ENCODE measurements at regions of chr13 and their contacts with region 1.

Region 1: GRCh38 chr13:20843166-20843565 is 59.4 kb downstream of the XPO4 start:
- DNase-seq: peak; percentile 18
- ATAC-seq: no peak
- H3K4me3 ChIP-seq: no peak overlapping the region
- H3K27ac ChIP-seq: no peak overlapping the region
- H3K4me1 ChIP-seq: 0 out of 2 replicates have a peak, but pooled peaks cover 2% of the 10 kb centered on the region
- H3K27me3 ChIP-seq: no peaks in the 10 kb centered on the region
- CTCF ChIP-seq: no peak
- POLR2A ChIP-seq: no peak
- RAD21 ChIP-seq: no peak

Region 2: GRCh38 chr13:20197361-20197834 is 645.8 kb before region 1 on chr13:
- CTCF ChIA-PET with region 1: no interaction called
- POLR2A ChIA-PET with region 1: no interaction called
- dilution Hi-C with region 1: loop called (anchors 10 kb)
- in situ Hi-C with region 1: loop called (anchors 25 kb)
- intact Hi-C with region 1: no loop called
- DNase-seq: peak; percentile 56
- ATAC-seq: peak; percentile 73
- H3K4me3 ChIP-seq: no peak overlapping the region
- H3K27ac ChIP-seq: no peak overlapping the region
- H3K4me1 ChIP-seq: peaks cover 2% of the 10 kb centered on the region; the same call in 1 of the 2 replicates
- H3K27me3 ChIP-seq: peaks cover 65% of the 10 kb centered on the region
- CTCF ChIP-seq: peak; percentile 80
- POLR2A ChIP-seq: no peak
- RAD21 ChIP-seq: peak; percentile 76

Region 3: DNA sequence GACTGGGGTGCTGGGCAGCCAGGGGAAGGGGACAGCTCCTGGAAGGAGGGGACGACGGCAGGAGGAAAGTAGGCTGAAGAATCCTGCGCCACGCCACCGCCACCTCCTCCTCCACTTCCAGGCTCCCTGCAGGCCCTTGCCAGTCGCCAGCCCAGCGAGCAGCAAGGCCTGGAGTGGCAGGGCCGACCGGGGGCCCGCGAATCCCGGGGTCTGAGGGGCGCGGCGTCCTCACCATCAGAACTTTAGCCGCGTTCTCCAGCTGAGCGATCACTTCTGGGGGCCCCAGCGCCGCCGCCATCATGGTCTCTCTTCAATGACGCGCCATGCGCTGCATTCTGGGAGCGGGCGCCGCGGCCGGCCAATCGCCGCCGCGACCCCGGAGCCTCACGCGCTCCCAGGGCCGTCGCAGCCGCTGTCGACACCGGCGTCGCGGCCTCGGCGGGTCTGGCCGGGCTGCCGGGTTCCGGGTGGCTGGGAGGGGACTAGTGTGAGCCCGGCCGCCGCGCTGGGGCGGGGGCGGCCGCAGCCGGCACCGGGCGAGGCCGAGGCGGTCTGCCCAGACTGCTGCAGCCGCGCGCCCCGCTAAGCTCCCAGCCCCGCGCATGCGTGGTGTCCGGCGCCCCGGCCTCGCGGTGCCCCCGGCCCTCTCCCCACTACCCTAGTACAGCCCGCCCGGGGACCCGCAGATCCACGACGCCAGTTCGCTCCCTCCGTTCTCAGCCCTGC is 59.4 kb after region 1 on chr13 and contains the start of gene XPO4:
- CTCF ChIA-PET with region 1: no interaction called
- POLR2A ChIA-PET with region 1: no interaction called
- dilution Hi-C with region 1: no loop called
- in situ Hi-C with region 1: no loop called
- intact Hi-C with region 1: loop called (anchors 5 kb)
- DNase-seq: peak; percentile 69
- ATAC-seq: peak; percentile 98
- H3K4me3 ChIP-seq: peak within 1 kb of the TSS; percentile 90
- H3K27ac ChIP-seq: peak within 1 kb of the TSS; percentile 86
- H3K4me1 ChIP-seq: no peaks in the 10 kb centered on the region
- H3K27me3 ChIP-seq: no peaks in the 10 kb centered on the region
- CTCF ChIP-seq: no peak
- POLR2A ChIP-seq: peak; percentile 81
- RAD21 ChIP-seq: no peak
- total RNA-seq, gene XPO4: 21.1 and 25.3 TPM in 2 replicates